ENCODE measurements at regions of chr9 and their contacts with region 1.

Region 1: GRCh38 chr9:119556129-119556875 is 187.1 kb upstream of the BRINP1 start:
- DNase-seq: peak in 1 of 2 experiments; percentile 54
- H3K4me3 ChIP-seq: no peak overlapping the region
- H3K27ac ChIP-seq: no peak overlapping the region
- H3K4me1 ChIP-seq: no peaks in the 10 kb centered on the region
- H3K27me3 ChIP-seq: no peaks in the 10 kb centered on the region
- CTCF ChIP-seq: peak; percentile 81

Region 2: DNA sequence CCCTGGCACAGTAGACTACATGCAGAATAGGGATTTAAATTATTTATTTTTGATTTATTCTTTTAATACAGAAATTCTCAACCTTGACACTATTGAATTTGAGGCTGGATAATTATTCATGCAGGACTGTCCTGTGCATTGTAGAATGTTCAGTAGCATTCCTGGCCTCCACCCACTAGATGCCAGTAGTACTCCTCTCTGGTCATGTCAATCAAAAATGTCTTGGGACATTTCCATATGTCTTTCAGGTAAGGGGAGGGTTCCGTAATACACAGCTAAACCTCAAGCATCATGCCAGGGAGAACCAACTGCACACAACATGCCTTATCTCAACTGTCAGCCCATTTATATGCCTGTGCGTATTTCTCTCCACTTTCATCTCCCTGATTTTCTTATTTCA is 418.8 kb before region 1 on chr9:
- CTCF ChIA-PET with region 1: no interaction called
- POLR2A ChIA-PET with region 1: no interaction called
- intact Hi-C with region 1: loop called (anchors 10 kb)
- DNase-seq: no peak
- H3K4me3 ChIP-seq: no peak overlapping the region
- H3K27ac ChIP-seq: no peak overlapping the region
- H3K4me1 ChIP-seq: no peaks in the 10 kb centered on the region
- H3K27me3 ChIP-seq: no peaks in the 10 kb centered on the region
- CTCF ChIP-seq: no peak

Region 3: GRCh38 chr9:119810645-119811429 is 254.5 kb after region 1 on chr9:
- CTCF ChIA-PET with region 1: no interaction called
- POLR2A ChIA-PET with region 1: no interaction called
- intact Hi-C with region 1: no loop called
- DNase-seq: no peak
- H3K4me3 ChIP-seq: no peak overlapping the region
- H3K27ac ChIP-seq: no peak overlapping the region
- H3K4me1 ChIP-seq: no peaks in the 10 kb centered on the region
- H3K27me3 ChIP-seq: no peaks in the 10 kb centered on the region
- CTCF ChIP-seq: no peak

Region 4: GRCh38 chr9:119968836-119969707 is 412.8 kb after region 1 on chr9:
- CTCF ChIA-PET with region 1: no interaction called
- POLR2A ChIA-PET with region 1: no interaction called
- intact Hi-C with region 1: loop called (anchors 5 kb)
- DNase-seq: peak in 1 of 2 experiments; percentile 60
- H3K4me3 ChIP-seq: no peak overlapping the region
- H3K27ac ChIP-seq: no peak overlapping the region
- H3K4me1 ChIP-seq: no peaks in the 10 kb centered on the region
- H3K27me3 ChIP-seq: peaks cover 20% of the 10 kb centered on the region
- CTCF ChIP-seq: peak; percentile 85